Activated CD4-positive, alpha-beta memory T cell treated with anti-CD3 and anti-CD28 coated beads, Interleukin-2, amount 10 ng/mL, durations not matched to agents 7 days and 5 days (primary cell): ENCODE measurements at regions of chr2 and their contacts with region 1.

Region 1: GRCh38 chr2:26033818-26034636 is at the start of gene RAB10:
- DNase-seq: peak; percentile 100
- H3K4me3 Mint-ChIP-seq: peak within 1 kb of the TSS; percentile 87
- H3K27ac Mint-ChIP-seq: peak within 1 kb of the TSS; percentile 93
- H3K4me1 Mint-ChIP-seq: peaks cover 35% of the 10 kb centered on the region
- H3K27me3 Mint-ChIP-seq: no peaks in the 10 kb centered on the region
- total RNA-seq, gene RAB10: 116 to 117 TPM

Region 2: DNA sequence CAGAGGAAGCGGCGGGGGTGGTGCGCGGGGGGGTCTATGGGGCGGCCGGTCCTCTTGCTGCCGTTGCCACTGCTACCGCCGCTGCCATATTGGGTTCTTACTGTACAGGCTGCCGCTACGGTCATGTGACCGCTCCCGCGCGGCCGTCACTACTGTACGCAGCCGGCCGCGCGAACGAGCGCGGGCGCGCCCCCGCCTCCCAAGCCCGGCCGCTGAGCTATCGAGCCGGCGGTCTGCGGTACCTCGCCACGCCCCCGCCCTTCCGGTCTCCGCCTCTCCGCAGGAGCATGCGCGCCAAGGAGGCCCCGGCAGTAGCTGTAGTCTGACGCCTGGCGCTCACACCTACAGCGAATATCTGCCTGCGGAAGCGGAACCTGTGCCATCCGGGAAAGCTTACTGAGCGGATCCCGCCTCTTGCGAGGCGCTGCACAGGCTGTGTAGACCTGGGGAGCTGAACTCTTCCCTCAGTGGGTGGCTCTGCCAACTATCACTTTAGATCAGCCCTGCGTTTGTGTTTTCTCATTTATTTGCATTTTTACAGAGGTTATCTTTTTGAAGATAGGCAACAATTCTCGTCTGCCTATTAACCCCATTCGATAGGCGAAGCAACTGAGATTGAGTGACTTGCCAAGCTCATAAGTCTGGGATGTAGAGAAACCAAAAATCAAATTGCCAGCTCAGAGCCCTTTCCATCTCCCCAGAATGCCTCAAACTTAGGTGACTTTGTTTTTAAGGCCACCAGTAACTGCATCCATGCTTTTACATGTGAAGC is 155.5 kb before region 1 on chr2 and contains the start of gene ASXL2:
- CTCF ChIA-PET with region 1: no interaction called
- POLR2A ChIA-PET with region 1: interaction called, 19 read pairs
- DNase-seq: peak; percentile 98
- H3K4me3 Mint-ChIP-seq: peak within 1 kb of the TSS; percentile 95
- H3K27ac Mint-ChIP-seq: peak within 1 kb of the TSS; percentile 99
- H3K4me1 Mint-ChIP-seq: peaks cover 41% of the 10 kb centered on the region
- H3K27me3 Mint-ChIP-seq: no peaks in the 10 kb centered on the region
- total RNA-seq, gene ASXL2: 43.7 to 45.0 TPM

Region 3: DNA sequence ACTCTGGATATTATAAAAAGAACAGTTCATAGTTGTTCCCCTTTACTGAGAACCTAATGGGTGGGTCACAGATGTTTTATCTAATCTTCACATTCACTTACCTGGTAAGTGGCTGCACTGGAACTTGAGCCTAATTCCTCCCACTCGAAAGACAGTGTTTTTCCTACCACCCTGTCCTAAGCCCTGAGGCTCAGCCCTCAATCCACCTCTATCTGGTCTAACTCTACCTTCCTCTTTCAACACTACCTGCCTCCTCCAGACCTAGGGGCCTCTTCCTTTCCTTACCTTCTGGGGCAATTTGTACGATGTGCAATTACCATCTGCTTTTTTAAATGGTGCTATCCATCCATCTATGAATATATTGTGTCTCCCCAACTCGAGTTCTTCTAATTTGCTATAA is 42.1 kb before region 1 on chr2:
- CTCF ChIA-PET with region 1: interaction called, 13 read pairs
- POLR2A ChIA-PET with region 1: interaction called, 10 read pairs
- DNase-seq: no peak
- H3K4me3 Mint-ChIP-seq: no peak overlapping the region
- H3K27ac Mint-ChIP-seq: no peak overlapping the region
- H3K4me1 Mint-ChIP-seq: peaks cover 28% of the 10 kb centered on the region
- H3K27me3 Mint-ChIP-seq: peaks cover 12% of the 10 kb centered on the region

Region 4: DNA sequence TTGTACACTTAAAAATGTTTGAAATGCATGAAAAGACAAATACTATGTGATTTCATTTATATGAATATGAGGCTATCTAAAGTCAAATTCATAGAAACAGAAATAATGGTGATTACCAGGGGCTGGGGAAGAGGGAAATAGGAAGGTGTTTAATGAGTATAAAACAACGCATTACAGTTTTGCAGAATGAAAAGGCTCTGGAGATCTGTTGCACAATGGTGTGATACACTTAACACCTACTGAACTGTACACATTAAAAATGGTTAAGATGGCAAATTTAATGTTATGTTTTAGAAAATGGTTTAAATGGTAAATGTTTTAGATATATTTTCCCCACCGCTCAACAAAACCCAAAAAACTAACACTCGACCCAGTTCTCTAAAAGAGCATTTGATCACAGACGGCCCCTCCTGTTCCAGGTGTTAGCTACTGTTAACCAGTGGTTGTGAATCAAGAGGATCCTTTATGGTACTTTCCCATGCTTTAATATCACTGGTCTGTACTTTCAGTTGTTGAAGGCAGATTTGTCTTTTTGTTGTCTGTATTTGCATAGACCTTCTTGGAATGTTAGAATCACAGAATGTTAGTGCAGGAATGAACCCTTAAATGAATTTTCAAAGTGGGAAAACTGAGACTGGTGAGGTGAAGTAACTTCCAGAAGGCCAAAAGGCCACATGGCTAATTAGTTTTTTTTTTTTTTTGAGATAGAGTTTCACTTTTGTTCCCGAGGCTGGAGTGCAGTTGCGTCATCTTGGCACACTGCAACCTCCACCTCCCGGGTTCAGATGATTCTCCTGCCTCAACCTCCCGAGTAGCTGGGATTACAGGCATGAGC is 10.1 kb after region 1 on chr2:
- CTCF ChIA-PET with region 1: interaction called, 3 read pairs
- POLR2A ChIA-PET with region 1: interaction called, 11 read pairs
- DNase-seq: peak; percentile 26
- H3K4me3 Mint-ChIP-seq: peak overlapping the region; percentile 34
- H3K27ac Mint-ChIP-seq: peak overlapping the region; percentile 37
- H3K4me1 Mint-ChIP-seq: peaks cover 51% of the 10 kb centered on the region
- H3K27me3 Mint-ChIP-seq: no peaks in the 10 kb centered on the region

Region 5: GRCh38 chr2:26068602-26069298 is 34.7 kb after region 1 on chr2:
- CTCF ChIA-PET with region 1: interaction called, 7 read pairs
- POLR2A ChIA-PET with region 1: interaction called, 171 read pairs
- DNase-seq: peak; percentile 71
- H3K4me3 Mint-ChIP-seq: peak overlapping the region; percentile 68
- H3K27ac Mint-ChIP-seq: peak overlapping the region; percentile 95
- H3K4me1 Mint-ChIP-seq: peaks cover 71% of the 10 kb centered on the region
- H3K27me3 Mint-ChIP-seq: no peaks in the 10 kb centered on the region

Region 6: DNA sequence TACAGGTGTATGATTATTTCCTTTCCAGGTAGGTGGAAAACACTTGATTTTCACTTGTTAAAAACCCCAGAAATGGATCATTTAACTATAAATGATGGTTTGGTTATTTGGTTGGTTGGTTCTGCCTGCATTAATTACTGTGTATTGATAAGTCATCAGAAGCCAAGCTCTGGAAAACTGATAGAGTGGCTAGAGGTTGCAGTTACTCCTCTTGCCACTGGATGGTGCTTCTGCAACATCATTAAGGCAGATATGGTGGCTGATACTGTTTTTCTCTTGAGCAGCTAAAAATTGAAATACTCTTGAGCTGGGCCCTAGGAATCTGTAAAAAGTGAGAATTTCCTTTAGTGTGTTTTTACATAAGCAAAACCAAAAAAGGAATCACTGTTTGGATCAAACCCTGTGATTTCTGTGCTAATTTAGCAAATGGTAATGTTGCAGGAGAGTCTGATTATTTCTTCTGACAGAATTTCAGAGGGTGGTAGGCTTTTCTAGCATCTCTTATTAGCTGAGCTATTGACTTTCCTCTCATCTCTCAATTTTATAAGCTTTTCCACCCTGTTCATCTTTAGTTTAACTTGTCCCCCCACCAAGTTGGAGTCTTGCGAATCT is 54.1 kb after region 1 on chr2:
- CTCF ChIA-PET with region 1: interaction called, 8 read pairs
- POLR2A ChIA-PET with region 1: interaction called, 30 read pairs
- DNase-seq: no peak
- H3K4me3 Mint-ChIP-seq: no peak overlapping the region
- H3K27ac Mint-ChIP-seq: no peak overlapping the region
- H3K4me1 Mint-ChIP-seq: peaks cover 48% of the 10 kb centered on the region
- H3K27me3 Mint-ChIP-seq: no peaks in the 10 kb centered on the region

Region 7: GRCh38 chr2:26244309-26245121 is 210.5 kb after region 1 on chr2 and contains the starts of genes HADHA and HADHB:
- CTCF ChIA-PET with region 1: interaction called, 4 read pairs
- POLR2A ChIA-PET with region 1: interaction called, 17 read pairs
- DNase-seq: peak; percentile 84
- H3K4me3 Mint-ChIP-seq: peak within 1 kb of the TSS; percentile 100
- H3K27ac Mint-ChIP-seq: peak within 1 kb of the TSS; percentile 98
- H3K4me1 Mint-ChIP-seq: peaks cover 55% of the 10 kb centered on the region
- H3K27me3 Mint-ChIP-seq: no peaks in the 10 kb centered on the region
- total RNA-seq, gene HADHA: 108 to 110 TPM
- total RNA-seq, gene HADHB: 71.4 to 72.6 TPM